Gastrocnemius medialis (tissue), 4 donors: ENCODE measurements at regions of chr10 and their contacts with region 1.

Region 1: GRCh38 chr10:90912174-90912573 is 8.7 kb downstream of the ANKRD1 start:
- DNase-seq: no peak
- ATAC-seq: no peak
- H3K4me3 ChIP-seq: no peak overlapping the region
- H3K27ac ChIP-seq: peak overlapping the region in 3 of 4 donors; percentile 27 to 70 (median 56)
- H3K4me1 ChIP-seq: no peaks in the 10 kb centered on the region
- H3K27me3 ChIP-seq: no peaks in the 10 kb centered on the region
- CTCF ChIP-seq: no peak
- POLR2A ChIP-seq: no peak

Region 2: DNA sequence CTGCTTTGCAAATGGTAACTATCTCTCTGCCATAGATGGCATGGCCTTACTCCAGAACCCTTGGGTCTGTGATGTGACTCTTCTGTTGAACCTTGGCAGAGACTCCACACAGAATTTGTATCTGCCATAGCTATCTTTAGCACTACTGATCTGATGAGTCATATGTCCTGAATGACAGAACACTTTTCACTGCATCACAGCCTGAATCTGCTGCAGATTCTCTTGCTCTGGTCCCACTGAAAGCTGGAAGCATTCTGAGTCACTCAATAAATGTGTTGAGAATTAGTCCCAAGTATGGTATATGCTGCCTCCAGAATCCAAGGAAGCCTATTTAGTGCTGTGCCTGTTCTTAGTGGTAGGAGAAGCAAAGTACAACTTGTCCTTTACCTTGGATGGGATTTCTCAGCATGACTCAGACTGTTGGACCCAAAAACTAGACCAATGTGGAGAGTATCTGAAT is 48.2 kb after region 1 on chr10:
- in situ Hi-C with region 1: loop called in 2 of 4 experiments (anchors 5 to 10 kb)
- intact Hi-C with region 1: no loop called
- DNase-seq: peak; percentile 49 to 69
- ATAC-seq: peak; percentile 94
- H3K4me3 ChIP-seq: no peak overlapping the region
- H3K27ac ChIP-seq: peak overlapping the region; percentile 72 to 89 (median 86)
- H3K4me1 ChIP-seq: peaks cover 29 to 31% of the 10 kb centered on the region in 2 donors
- H3K27me3 ChIP-seq: no peaks in the 10 kb centered on the region
- CTCF ChIP-seq: peak in 1 of 5 experiments; percentile 39
- POLR2A ChIP-seq: no peak

Region 3: DNA sequence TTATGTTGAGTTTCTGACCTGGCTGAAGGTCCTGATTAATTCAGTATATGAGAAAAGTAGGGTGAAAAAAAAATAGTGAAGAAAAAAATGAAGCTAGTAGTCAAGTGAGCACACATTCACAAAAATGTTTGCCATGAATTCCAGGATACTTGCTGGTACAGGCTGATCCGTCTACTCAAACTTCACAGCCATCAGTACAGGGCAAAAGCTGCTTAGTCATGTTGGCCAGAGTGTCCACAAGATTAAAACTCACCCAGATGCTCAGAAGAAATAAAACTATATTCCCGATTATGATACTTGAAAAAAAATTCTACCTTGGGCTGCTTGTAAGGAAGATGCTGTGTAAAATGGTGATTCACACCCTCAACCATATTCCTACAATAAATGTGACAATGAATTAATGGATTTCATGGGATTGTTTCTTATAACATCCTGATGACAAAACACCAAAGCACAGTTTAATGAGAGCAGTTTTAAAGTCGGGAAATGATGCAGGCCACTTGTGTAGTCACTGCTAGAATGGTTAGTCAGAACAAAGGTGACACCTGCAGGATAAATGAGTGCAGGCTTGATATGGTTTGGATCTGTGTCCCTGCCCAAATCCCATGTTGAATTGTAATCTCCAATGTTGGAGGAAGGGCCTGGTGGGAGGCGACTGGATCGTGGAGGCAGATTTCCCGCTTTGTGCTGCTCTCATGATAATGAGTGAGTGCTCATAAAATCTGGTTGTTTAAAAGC is 57.9 kb after region 1 on chr10:
- in situ Hi-C with region 1: loop called in 2 of 4 experiments (anchors 5 to 10 kb)
- intact Hi-C with region 1: loop called (anchors 1 kb)
- DNase-seq: no peak
- ATAC-seq: peak; percentile 67 to 87
- H3K4me3 ChIP-seq: no peak overlapping the region
- H3K27ac ChIP-seq: peak overlapping the region; percentile 31 to 78 (median 56)
- H3K4me1 ChIP-seq: peaks cover 16 to 23% of the 10 kb centered on the region in 2 donors
- H3K27me3 ChIP-seq: no peaks in the 10 kb centered on the region
- CTCF ChIP-seq: peak in 3 of 5 experiments; percentile 31 to 49 (median 45)
- POLR2A ChIP-seq: no peak

Region 4: GRCh38 chr10:91006001-91006751 is 94.0 kb after region 1 on chr10:
- in situ Hi-C with region 1: loop called in 1 of 4 experiments (anchors 10 kb)
- intact Hi-C with region 1: no loop called
- DNase-seq: peak; percentile 14 to 47
- ATAC-seq: peak; percentile 88 to 97
- H3K4me3 ChIP-seq: no peak overlapping the region
- H3K27ac ChIP-seq: peak overlapping the region in 1 of 4 donors; percentile 23
- H3K4me1 ChIP-seq: peaks cover 0 to 4% of the 10 kb centered on the region in 2 donors
- H3K27me3 ChIP-seq: no peaks in the 10 kb centered on the region
- CTCF ChIP-seq: peak; percentile 88 to 95 (median 91)
- POLR2A ChIP-seq: no peak

Region 5: GRCh38 chr10:91409869-91410637 is 497.9 kb after region 1 on chr10 and contains the start of gene HECTD2:
- in situ Hi-C with region 1: no loop called
- intact Hi-C with region 1: no loop called
- DNase-seq: peak; percentile 46 to 71
- ATAC-seq: peak; percentile 84
- H3K4me3 ChIP-seq: peak within 1 kb of the TSS; percentile 70 to 91 (median 80)
- H3K27ac ChIP-seq: peak within 1 kb of the TSS; percentile 89 to 98 (median 97)
- H3K4me1 ChIP-seq: peaks cover 8 to 11% of the 10 kb centered on the region in 2 donors
- H3K27me3 ChIP-seq: no peaks in the 10 kb centered on the region
- CTCF ChIP-seq: peak in 4 of 5 experiments; percentile 64 to 84 (median 73)
- POLR2A ChIP-seq: peak; percentile 47 to 73
- total RNA-seq, gene HECTD2: 1.9 to 7.9 (median 3.9) TPM